Activated T-helper 2 cell treated with anti-CD3 and anti-CD28 coated beads, Interferon-gamma antibody, Interleukin-2, Interleukin-4, amounts not matched to agents 10 μg/mL and 5 μg/mL and 100 μg/mL, durations not matched to agents 14 hours and 24 hours and 36 hours (primary cell): ENCODE measurements at regions of chr9 and their contacts with region 1.

Region 1: DNA sequence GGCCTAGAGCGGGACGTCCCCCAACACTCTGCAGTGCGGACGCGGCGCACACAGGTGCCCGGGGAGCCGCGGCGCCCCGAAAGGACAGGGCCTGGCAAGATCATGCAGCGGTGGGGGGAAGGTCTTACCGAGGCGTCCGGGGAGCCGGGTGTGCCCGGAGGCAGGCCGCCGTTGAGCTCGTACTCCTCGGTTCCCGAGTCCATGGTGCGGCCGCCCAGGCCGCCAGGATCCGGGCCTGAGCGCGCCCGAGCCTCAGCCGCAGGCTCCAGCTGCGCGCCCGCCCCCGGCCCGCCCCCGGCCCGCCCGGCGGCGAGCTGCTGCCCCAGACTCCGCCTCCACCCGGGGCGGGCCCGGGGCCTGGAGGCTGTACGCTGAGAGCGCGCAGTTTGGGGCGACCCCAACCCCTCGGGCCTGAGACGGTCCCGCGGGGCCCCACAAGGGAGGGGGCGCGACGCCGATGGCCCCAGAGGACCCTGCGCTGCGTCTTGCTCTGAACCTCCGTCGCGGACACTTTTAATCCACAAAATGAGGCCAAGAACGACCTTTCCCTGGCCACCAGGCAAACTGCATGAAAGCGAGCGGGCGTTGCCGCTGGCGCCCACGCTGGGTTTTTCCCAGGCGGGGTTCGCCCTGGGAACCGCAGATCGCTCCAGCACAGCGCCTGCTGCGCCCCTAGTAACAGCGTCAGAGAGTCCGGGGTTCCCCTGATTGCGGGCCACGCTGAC is at the start of gene NINJ1:
- DNase-seq: peak; percentile 78
- H3K4me3 Mint-ChIP-seq: peak within 1 kb of the TSS; percentile 90
- H3K27ac Mint-ChIP-seq: peak within 1 kb of the TSS; percentile 94
- H3K4me1 Mint-ChIP-seq: peaks cover 43% of the 10 kb centered on the region
- H3K27me3 Mint-ChIP-seq: no peaks in the 10 kb centered on the region
- total RNA-seq, gene NINJ1: 113 and 114 TPM in 2 replicates

Region 2: GRCh38 chr9:92917176-92917800 is 216.9 kb before region 1 on chr9:
- intact Hi-C with region 1: no loop called
- DNase-seq: no peak
- H3K4me3 Mint-ChIP-seq: no peak overlapping the region
- H3K27ac Mint-ChIP-seq: no peak overlapping the region
- H3K4me1 Mint-ChIP-seq: no peaks in the 10 kb centered on the region
- H3K27me3 Mint-ChIP-seq: peaks cover 10% of the 10 kb centered on the region

Region 3: GRCh38 chr9:93095205-93096130 is 38.7 kb before region 1 on chr9:
- intact Hi-C with region 1: loop called (anchors 2 kb)
- DNase-seq: peak; percentile 100
- H3K4me3 Mint-ChIP-seq: peak overlapping the region; percentile 83
- H3K27ac Mint-ChIP-seq: peak overlapping the region; percentile 98
- H3K4me1 Mint-ChIP-seq: peaks cover 66% of the 10 kb centered on the region
- H3K27me3 Mint-ChIP-seq: no peaks in the 10 kb centered on the region

Region 4: DNA sequence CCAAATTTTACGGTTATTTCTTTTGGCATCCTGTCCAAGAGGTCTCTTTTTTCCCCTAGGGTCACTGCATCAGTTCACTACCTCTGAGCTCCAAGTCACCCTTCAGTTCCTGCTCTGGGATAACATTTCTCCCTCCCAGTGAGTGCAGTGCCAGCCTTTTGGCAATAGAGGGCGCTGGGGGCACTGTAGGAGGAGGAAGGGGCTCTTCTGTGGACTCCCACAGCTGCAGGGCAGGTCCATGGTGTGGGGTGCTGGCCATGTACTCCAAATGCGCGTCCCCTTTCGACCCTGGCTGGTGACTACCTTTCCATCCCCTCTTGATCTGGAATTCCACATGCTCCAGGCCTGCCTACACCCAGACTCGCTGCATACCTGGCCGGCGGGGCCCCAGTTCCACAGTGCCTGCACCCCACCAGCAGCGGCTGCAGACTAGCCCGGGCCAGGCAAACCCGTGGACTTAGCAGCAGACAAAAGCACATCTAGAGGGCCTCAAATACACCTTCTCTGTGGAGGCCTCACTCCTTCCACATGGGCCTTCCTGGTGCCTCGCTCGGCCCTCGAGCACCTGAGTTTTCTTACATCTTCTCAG is 20.2 kb after region 1 on chr9:
- intact Hi-C with region 1: loop called (anchors 1 kb)
- DNase-seq: peak; percentile 24
- H3K4me3 Mint-ChIP-seq: no peak overlapping the region
- H3K27ac Mint-ChIP-seq: peak overlapping the region; percentile 22
- H3K4me1 Mint-ChIP-seq: peaks cover 36% of the 10 kb centered on the region
- H3K27me3 Mint-ChIP-seq: no peaks in the 10 kb centered on the region

Region 5: GRCh38 chr9:94259077-94259892 is 1125.1 kb after region 1 on chr9 and contains the start of gene ZNF169:
- intact Hi-C with region 1: no loop called
- DNase-seq: peak; percentile 83
- H3K4me3 Mint-ChIP-seq: peak within 1 kb of the TSS; percentile 100
- H3K27ac Mint-ChIP-seq: peak within 1 kb of the TSS; percentile 98
- H3K4me1 Mint-ChIP-seq: peaks cover 16% of the 10 kb centered on the region
- H3K27me3 Mint-ChIP-seq: peaks cover 12% of the 10 kb centered on the region
- total RNA-seq, gene ZNF169: 8.9 and 9.0 TPM in 2 replicates